CD8-positive, alpha-beta T cell (primary cell): ENCODE measurements at regions of chr5 and their contacts with region 1.

Region 1: DNA sequence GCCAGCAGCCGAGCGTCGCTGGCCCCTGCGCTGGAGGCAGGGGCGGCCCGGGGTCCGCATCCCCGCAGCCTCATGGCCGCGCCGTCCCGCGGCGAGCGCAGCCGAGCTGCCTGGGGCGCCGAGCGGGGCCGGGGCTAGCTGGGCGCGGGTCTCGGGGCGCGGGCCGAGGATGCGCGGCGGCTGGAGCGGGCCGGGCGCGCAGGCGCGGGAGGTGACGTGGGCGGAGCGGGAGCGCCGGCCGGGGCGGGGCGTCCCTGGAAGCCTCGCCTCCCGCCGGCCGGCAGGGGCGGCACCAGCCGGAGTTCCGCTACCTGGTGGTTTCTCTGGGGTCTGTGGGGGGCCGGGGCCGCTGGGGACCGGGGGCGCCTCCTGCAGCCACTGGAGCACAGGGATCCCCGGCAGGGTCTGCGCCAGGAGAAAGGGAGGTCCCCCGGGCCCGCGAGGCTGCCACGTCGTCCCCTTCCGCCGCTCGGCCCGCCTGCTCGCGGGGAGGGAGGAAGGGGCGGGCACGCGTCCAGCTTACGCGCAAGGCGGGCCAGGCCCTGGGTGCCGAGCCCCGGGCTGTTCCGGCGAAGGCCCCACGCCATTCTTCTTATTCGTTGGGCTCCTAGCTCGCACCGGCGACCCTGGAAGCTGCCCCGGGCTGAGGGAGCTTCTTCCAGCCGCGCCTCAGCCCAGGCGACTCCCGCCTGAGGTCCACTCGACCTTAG is at the start of gene LPCAT1:
- DNase-seq: peak; percentile 49 to 88 (median 73)
- ATAC-seq: peak; percentile 84
- H3K4me3 ChIP-seq: peak within 1 kb of the TSS; percentile 57 to 66
- H3K4me3 Mint-ChIP-seq: peak within 1 kb of the TSS; percentile 81
- H3K27ac ChIP-seq: peak within 1 kb of the TSS; percentile 52 to 78
- H3K27ac Mint-ChIP-seq: peak within 1 kb of the TSS; percentile 82
- H3K4me1 ChIP-seq: peaks cover 33% of the 10 kb centered on the region
- H3K4me1 Mint-ChIP-seq: peaks cover 24% of the 10 kb centered on the region
- H3K27me3 ChIP-seq: no peaks in the 10 kb centered on the region
- H3K27me3 Mint-ChIP-seq: no peaks in the 10 kb centered on the region
- CTCF ChIP-seq: no peak
- total RNA-seq, gene LPCAT1: 28.8 to 29.1 TPM

Region 2: DNA sequence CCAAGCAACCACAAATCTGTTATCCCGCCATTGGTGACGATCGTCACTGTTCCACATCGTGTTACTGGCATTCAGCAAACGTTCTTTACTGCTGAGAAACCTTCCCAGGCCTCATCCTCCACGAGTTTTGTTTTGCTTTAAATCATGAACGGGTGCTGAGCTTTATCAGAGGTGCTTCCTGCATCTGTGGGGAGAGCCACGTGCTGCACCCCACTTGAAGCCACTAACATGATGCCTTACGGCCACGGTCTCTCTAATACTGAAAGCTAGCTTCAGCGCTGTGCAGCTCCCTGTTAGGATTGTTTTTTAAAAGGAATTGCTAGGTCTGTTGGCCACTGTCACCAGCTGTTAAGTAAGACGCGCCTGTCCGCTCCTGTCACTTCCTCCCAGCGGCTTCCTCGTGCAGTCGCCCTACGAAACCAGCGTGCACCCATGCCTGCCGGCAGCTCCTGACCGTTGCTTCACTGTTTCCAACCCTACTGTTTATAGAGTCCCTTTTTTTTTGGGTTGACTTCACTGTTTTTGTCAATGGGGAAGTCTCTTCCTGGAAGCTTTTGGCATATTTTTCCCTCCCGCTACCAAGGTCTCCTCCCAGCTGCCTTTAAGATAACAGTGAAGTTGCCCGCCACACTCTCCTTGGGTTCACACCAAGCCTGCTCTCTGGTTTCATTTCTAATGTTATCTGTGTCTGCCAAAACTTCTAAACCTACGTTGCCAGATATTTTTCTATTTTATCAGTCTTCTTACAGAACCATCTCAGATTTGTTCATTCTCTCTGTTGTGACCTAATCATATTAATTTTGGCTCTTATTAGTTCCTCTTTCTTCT is 20.5 kb before region 1 on chr5:
- CTCF ChIA-PET with region 1: no interaction called
- POLR2A ChIA-PET with region 1: interaction called, 10 read pairs
- intact Hi-C with region 1: no loop called
- DNase-seq: peak in 4 of 9 experiments; percentile 22 to 67 (median 44)
- ATAC-seq: peak; percentile 27
- H3K4me3 ChIP-seq: peak overlapping the region; percentile 16 to 18
- H3K4me3 Mint-ChIP-seq: peak overlapping the region; percentile 44
- H3K27ac ChIP-seq: peak overlapping the region in 1 of 2 experiments; percentile 76
- H3K27ac Mint-ChIP-seq: peak overlapping the region; percentile 60
- H3K4me1 ChIP-seq: peaks cover 23% of the 10 kb centered on the region
- H3K4me1 Mint-ChIP-seq: peaks cover 38% of the 10 kb centered on the region
- H3K27me3 ChIP-seq: no peaks in the 10 kb centered on the region
- H3K27me3 Mint-ChIP-seq: no peaks in the 10 kb centered on the region
- CTCF ChIP-seq: no peak

Region 3: GRCh38 chr5:1594357-1595106 is 70.6 kb after region 1 on chr5:
- CTCF ChIA-PET with region 1: no interaction called
- POLR2A ChIA-PET with region 1: no interaction called
- intact Hi-C with region 1: loop called in 1 of 2 experiments (anchors 1 kb)
- DNase-seq: peak; percentile 75 to 94 (median 89)
- ATAC-seq: peak; percentile 94
- H3K4me3 ChIP-seq: peak overlapping the region; percentile 67 to 90
- H3K4me3 Mint-ChIP-seq: peak overlapping the region; percentile 81
- H3K27ac ChIP-seq: peak overlapping the region; percentile 48 to 56
- H3K27ac Mint-ChIP-seq: peak overlapping the region; percentile 62
- H3K4me1 ChIP-seq: peaks cover 3% of the 10 kb centered on the region
- H3K4me1 Mint-ChIP-seq: peaks cover 8% of the 10 kb centered on the region
- H3K27me3 ChIP-seq: no peaks in the 10 kb centered on the region
- H3K27me3 Mint-ChIP-seq: no peaks in the 10 kb centered on the region
- CTCF ChIP-seq: peak; percentile 37